ENCODE measurements at regions of chr4 and their contacts with region 1.

Region 1: DNA sequence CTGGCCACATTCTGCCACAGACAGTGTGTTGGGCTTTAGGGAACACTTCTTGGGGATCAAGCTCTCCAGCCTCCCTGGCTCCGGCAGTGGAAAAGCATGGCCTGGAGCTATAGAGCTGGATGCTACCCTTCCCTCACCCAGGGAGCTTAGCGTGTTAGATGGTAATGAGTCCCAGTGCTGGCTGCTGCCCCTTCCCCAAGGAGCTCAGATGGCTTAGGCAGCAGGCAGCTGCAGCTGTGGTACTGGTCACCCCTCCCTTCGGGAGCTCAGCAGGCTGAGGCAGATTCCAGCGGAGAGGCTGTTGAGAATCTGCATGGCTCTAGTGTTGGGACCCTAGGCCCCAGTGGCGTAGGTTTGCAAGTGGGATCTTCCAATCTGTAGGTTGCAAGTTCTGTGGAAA is 19.5 kb downstream of the TMEM144 start:
- DNase-seq: no peak
- H3K4me3 ChIP-seq: no peak overlapping the region
- H3K4me3 Mint-ChIP-seq: no peak overlapping the region
- H3K27ac Mint-ChIP-seq: no peak overlapping the region
- H3K4me1 ChIP-seq: 0 out of 2 replicates have a peak, but pooled peaks cover 12% of the 10 kb centered on the region
- H3K4me1 Mint-ChIP-seq: peaks cover 18% of the 10 kb centered on the region
- H3K27me3 ChIP-seq: no peaks in the 10 kb centered on the region
- H3K27me3 Mint-ChIP-seq: no peaks in the 10 kb centered on the region
- CTCF ChIP-seq: no peak

Region 2: GRCh38 chr4:157994895-157995294 is 234.9 kb before region 1 on chr4:
- CTCF ChIA-PET with region 1: no interaction called
- POLR2A ChIA-PET with region 1: no interaction called
- intact Hi-C with region 1: no loop called
- DNase-seq: peak in 1 of 2 experiments; percentile 54
- H3K4me3 ChIP-seq: no peak overlapping the region
- H3K4me3 Mint-ChIP-seq: peak overlapping the region; percentile 49
- H3K27ac Mint-ChIP-seq: no peak overlapping the region
- H3K4me1 ChIP-seq: peaks cover 42% of the 10 kb centered on the region
- H3K4me1 Mint-ChIP-seq: peaks cover 21% of the 10 kb centered on the region
- H3K27me3 ChIP-seq: no peaks in the 10 kb centered on the region
- H3K27me3 Mint-ChIP-seq: no peaks in the 10 kb centered on the region
- CTCF ChIP-seq: no peak

Region 3: DNA sequence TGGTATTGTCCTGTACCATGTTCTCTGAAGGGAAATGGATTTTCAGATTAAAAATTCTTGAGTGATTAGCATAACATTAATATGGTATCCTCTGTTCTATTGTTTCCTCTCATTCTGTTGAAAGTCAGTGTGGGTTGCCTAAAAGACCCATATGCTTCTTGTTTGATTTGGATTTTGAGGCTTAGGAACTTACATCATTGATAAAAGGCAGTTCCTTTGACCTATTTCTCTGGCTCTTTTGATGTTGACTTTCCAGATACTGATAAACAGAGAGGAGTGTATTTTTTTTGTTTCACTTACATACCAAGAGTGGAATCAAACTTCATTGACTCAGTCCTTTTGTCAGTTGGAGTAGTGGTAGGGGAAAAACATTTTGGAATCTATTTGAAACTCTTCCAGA is 13.3 kb after region 1 on chr4:
- CTCF ChIA-PET with region 1: no interaction called
- POLR2A ChIA-PET with region 1: no interaction called
- intact Hi-C with region 1: loop called (anchors 2 kb)
- DNase-seq: peak in 1 of 2 experiments; percentile 41
- H3K4me3 ChIP-seq: no peak overlapping the region
- H3K4me3 Mint-ChIP-seq: peak overlapping the region; percentile 20
- H3K27ac Mint-ChIP-seq: peak overlapping the region; percentile 71
- H3K4me1 ChIP-seq: peaks cover 13% of the 10 kb centered on the region
- H3K4me1 Mint-ChIP-seq: peaks cover 14% of the 10 kb centered on the region
- H3K27me3 ChIP-seq: no peaks in the 10 kb centered on the region
- H3K27me3 Mint-ChIP-seq: no peaks in the 10 kb centered on the region
- CTCF ChIP-seq: no peak